ENCODE measurements at regions of chr1 and their contacts with region 1.

Region 1: DNA sequence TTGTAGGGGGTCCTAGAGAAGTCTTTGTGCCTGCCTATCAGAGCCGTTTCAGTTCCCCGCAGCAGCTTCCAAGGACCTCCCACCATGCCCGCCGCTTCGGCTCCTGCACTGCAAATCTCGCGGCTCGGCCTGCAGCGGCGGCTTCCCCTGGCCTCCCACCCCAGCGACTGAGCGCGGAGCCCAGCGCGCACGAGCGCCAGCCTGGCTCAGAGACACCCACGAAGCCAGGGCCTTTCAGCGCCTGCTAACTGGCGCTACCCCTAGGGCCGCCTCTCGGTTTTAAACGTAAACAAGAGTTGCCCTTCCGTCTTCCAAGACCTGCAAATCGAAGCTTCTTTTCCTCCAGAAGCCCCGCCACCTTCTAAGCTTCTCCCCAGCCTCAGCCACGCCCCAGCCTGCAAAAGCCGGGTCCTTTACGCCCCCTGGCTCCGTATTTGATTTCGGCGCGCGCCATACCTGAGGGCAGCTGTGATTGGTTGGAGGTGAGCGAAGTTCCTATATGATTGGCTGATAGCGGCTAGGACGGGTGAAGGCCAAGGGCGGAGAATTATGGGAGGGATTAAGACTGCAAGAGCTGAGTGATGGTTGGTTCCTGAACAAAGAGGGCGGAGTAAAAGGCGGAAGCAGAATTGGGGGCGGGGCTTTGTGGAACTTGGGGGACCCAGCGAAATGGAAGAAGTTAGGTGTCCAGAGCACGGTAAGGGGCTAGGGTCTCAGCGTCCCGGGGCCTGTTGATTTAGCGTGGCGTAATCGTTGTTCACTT is at the start of gene TTF2:
- DNase-seq: peak; percentile 95 to 97
- H3K4me3 ChIP-seq: peak within 1 kb of the TSS; percentile 64
- H3K4me3 Mint-ChIP-seq: no peak within 1 kb of the TSS
- H3K27ac Mint-ChIP-seq: no peak within 1 kb of the TSS
- H3K4me1 ChIP-seq: no peaks in the 10 kb centered on the region; the same call in 1 of the 2 replicates
- H3K4me1 Mint-ChIP-seq: no peaks in the 10 kb centered on the region
- H3K27me3 ChIP-seq: no peaks in the 10 kb centered on the region
- H3K27me3 Mint-ChIP-seq: no peaks in the 10 kb centered on the region
- CTCF ChIP-seq: peak in 1 of 2 experiments; percentile 5
- total RNA-seq, gene TTF2: 31.9 and 33.4 TPM in 2 replicates

Region 2: GRCh38 chr1:116853670-116854402 is 206.0 kb before region 1 on chr1:
- CTCF ChIA-PET with region 1: interaction called, 3 read pairs
- POLR2A ChIA-PET with region 1: interaction called, 5 read pairs
- intact Hi-C with region 1: loop called (anchors 10 kb)
- DNase-seq: peak; percentile 82 to 86
- H3K4me3 ChIP-seq: no peak overlapping the region
- H3K4me3 Mint-ChIP-seq: peak overlapping the region; percentile 16
- H3K27ac Mint-ChIP-seq: peak overlapping the region; percentile 72
- H3K4me1 ChIP-seq: peaks cover 24% of the 10 kb centered on the region
- H3K4me1 Mint-ChIP-seq: peaks cover 34% of the 10 kb centered on the region
- H3K27me3 ChIP-seq: no peaks in the 10 kb centered on the region
- H3K27me3 Mint-ChIP-seq: no peaks in the 10 kb centered on the region
- CTCF ChIP-seq: no peak

Region 3: DNA sequence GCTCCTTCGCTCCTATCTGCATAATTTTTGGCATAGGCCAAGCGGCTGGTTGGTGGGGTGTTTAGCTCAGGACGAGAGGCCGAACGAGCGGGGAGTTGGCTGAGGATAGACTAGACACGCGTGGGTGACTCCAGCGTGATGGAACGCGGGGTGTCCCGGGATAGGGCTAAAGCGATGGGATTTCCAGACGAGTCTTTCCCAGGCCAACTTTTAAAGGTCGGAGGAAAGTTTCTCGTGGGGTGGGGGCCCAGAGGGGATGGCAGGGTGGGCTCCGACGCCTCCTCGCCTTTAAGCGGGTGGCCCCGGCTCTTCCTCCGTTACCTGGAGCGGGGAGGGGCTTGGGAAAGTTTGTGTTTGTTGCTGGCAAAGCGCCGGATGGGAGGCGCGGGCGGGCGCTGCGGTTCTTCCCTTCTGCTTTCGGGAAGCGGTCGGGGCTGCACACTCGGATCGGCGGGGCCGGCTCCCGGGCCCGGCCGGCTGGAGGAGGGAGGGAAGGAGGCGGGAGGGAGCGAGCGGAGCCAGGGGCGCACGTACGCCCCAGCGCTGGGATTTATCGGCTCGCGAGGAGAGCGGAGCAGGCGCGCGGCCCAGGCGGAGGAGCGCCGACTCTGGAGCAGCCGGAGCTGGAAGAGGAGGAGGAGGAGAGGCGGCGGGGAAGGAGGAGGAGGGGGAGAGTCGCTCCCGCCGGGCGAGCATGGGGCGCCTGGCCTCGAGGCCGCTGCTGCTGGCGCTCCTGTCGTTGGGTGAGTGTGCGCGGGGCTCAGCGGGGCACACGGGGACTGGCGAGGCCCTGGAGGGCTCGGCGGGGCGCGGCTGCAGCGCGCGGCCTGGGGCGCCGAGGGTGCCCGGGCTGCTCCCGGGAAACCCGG is 150.1 kb before region 1 on chr1 and contains the start of gene PTGFRN:
- CTCF ChIA-PET with region 1: no interaction called
- POLR2A ChIA-PET with region 1: no interaction called
- intact Hi-C with region 1: loop called (anchors 10 kb)
- DNase-seq: peak; percentile 71 to 75
- H3K4me3 ChIP-seq: peak within 1 kb of the TSS; percentile 60
- H3K4me3 Mint-ChIP-seq: no peak within 1 kb of the TSS
- H3K27ac Mint-ChIP-seq: peak within 1 kb of the TSS; percentile 42
- H3K4me1 ChIP-seq: peaks cover 7% of the 10 kb centered on the region; the same call in 1 of the 2 replicates
- H3K4me1 Mint-ChIP-seq: no peaks in the 10 kb centered on the region
- H3K27me3 ChIP-seq: no peaks in the 10 kb centered on the region
- H3K27me3 Mint-ChIP-seq: no peaks in the 10 kb centered on the region
- CTCF ChIP-seq: no peak
- total RNA-seq, gene PTGFRN: 12.9 and 16.2 TPM in 2 replicates

Region 4: GRCh38 chr1:116987256-116987555 is 72.7 kb before region 1 on chr1:
- CTCF ChIA-PET with region 1: interaction called, 4 read pairs
- POLR2A ChIA-PET with region 1: interaction called, 7 read pairs
- intact Hi-C with region 1: loop called (anchors 1 kb)
- DNase-seq: peak; percentile 62 to 68
- H3K4me3 ChIP-seq: peak overlapping the region; percentile 40
- H3K4me3 Mint-ChIP-seq: peak overlapping the region; percentile 98
- H3K27ac Mint-ChIP-seq: peak overlapping the region; percentile 97
- H3K4me1 ChIP-seq: peaks cover 15% of the 10 kb centered on the region
- H3K4me1 Mint-ChIP-seq: peaks cover 6% of the 10 kb centered on the region
- H3K27me3 ChIP-seq: no peaks in the 10 kb centered on the region
- H3K27me3 Mint-ChIP-seq: no peaks in the 10 kb centered on the region
- CTCF ChIP-seq: no peak

Region 5: GRCh38 chr1:117121776-117122697 is 62.2 kb after region 1 on chr1:
- CTCF ChIA-PET with region 1: interaction called, 7 read pairs
- POLR2A ChIA-PET with region 1: no interaction called
- intact Hi-C with region 1: loop called (anchors 1 kb)
- DNase-seq: peak; percentile 93 to 94
- H3K4me3 ChIP-seq: peak overlapping the region; percentile 72
- H3K4me3 Mint-ChIP-seq: peak overlapping the region; percentile 87
- H3K27ac Mint-ChIP-seq: peak overlapping the region; percentile 90
- H3K4me1 ChIP-seq: 0 out of 2 replicates have a peak, but pooled peaks cover 5% of the 10 kb centered on the region
- H3K4me1 Mint-ChIP-seq: peaks cover 12% of the 10 kb centered on the region
- H3K27me3 ChIP-seq: no peaks in the 10 kb centered on the region
- H3K27me3 Mint-ChIP-seq: no peaks in the 10 kb centered on the region
- CTCF ChIP-seq: peak; percentile 54 to 65

Measured in Caco-2 (cell line).